ENCODE measurements at regions of chr10 and their contacts with region 1.

Region 1: GRCh38 chr10:102678842-102679289 is 34.6 kb downstream of the TRIM8 start:
- DNase-seq: peak; percentile 92
- ATAC-seq: peak; percentile 85
- H3K4me3 Mint-ChIP-seq: peak overlapping the region; percentile 27
- H3K27ac Mint-ChIP-seq: peak overlapping the region; percentile 94
- H3K4me1 Mint-ChIP-seq: peaks cover 61% of the 10 kb centered on the region
- H3K27me3 Mint-ChIP-seq: no peaks in the 10 kb centered on the region
- CTCF ChIP-seq: no peak; the same call in 1 of the 2 replicates

Region 2: DNA sequence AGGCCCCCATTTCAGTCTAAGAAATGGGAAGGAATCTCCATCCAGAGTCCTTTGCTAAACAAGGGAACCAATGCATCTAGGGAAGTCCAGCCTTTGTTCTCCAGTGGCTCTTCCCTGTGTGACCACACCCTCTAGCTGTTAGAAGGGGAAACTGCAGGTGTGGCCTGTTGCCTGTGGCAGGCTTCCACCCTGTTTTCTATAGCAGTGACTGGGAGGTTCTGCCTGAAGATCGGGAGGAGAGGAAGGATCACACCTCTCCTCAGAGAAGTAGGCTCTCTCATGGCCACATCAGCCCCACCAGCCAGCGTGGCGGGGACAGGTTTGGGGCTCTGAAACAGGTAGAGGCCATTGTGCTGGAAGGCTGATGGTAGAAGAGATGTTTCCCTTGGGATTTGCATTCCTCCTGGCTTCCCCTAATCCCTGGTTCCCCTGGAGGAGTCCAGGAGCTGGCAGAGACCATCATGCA is 82.3 kb before region 1 on chr10:
- CTCF ChIA-PET with region 1: interaction called, 13 read pairs
- POLR2A ChIA-PET with region 1: no interaction called
- DNase-seq: peak; percentile 72
- ATAC-seq: peak; percentile 90
- H3K4me3 Mint-ChIP-seq: no peak overlapping the region
- H3K27ac Mint-ChIP-seq: peak overlapping the region; percentile 28; the same call in 1 of the 2 replicates
- H3K4me1 Mint-ChIP-seq: peaks cover 16% of the 10 kb centered on the region
- H3K27me3 Mint-ChIP-seq: no peaks in the 10 kb centered on the region
- CTCF ChIP-seq: peak; percentile 60

Region 3: DNA sequence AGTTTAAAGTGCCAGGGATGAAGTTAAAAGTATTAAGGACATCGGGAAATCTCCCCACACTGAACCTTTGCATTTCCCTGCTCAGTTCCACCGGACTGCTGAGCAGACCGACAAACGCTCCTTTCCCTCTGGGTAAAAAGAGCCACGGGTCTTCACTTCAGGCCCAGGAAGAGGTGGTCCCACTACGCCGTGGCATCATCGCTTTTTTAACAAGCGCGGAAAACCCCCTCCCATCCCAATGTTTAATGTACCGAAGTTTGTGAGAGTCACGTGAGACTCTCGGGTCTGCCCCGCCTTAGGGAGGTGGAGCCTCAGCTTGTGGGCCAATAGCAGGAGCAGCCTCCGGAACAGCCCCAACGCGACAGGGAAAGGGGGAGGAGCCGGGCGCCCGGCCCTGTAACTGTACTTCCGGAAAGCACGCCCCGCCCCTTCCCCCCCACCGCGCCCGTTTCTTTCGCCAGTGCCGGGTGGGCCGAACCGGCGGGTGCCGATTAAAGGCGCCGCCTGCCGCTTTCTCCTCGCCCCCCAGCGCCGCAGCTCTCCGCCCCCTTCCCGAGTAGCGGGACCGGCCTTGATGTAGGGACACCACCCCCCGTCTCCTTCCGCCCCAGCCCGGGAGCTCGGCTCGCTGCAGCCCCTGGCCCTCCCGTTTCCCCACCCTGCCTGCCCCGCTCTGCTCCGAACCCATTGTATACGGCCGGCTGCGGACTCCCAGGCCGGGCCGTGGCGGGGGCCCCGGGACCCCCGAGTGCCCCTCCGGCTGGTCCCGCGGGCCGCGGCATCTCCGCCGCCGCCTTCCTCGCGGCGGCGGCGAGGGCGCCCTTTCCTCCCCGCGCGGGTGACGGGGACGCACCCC is 36.8 kb before region 1 on chr10:
- CTCF ChIA-PET with region 1: interaction called, 11 read pairs
- POLR2A ChIA-PET with region 1: interaction called, 5 read pairs
- DNase-seq: peak; percentile 99
- ATAC-seq: peak; percentile 86
- H3K4me3 Mint-ChIP-seq: peak overlapping the region; percentile 85
- H3K27ac Mint-ChIP-seq: peak overlapping the region; percentile 99
- H3K4me1 Mint-ChIP-seq: peaks cover 21% of the 10 kb centered on the region
- H3K27me3 Mint-ChIP-seq: peaks cover 4% of the 10 kb centered on the region; the same call in 1 of the 2 replicates
- CTCF ChIP-seq: no peak

Region 4: GRCh38 chr10:102656026-102656425 is 22.8 kb before region 1 on chr10:
- CTCF ChIA-PET with region 1: interaction called, 27 read pairs
- POLR2A ChIA-PET with region 1: interaction called, 6 read pairs
- DNase-seq: no peak
- ATAC-seq: no peak
- H3K4me3 Mint-ChIP-seq: no peak overlapping the region
- H3K27ac Mint-ChIP-seq: no peak overlapping the region
- H3K4me1 Mint-ChIP-seq: peaks cover 17% of the 10 kb centered on the region
- H3K27me3 Mint-ChIP-seq: no peaks in the 10 kb centered on the region; the same call in 1 of the 2 replicates
- CTCF ChIP-seq: no peak

Region 5: GRCh38 chr10:102713814-102714620 is 35.2 kb after region 1 on chr10 and contains the start of gene ARL3:
- CTCF ChIA-PET with region 1: interaction called, 101 read pairs
- POLR2A ChIA-PET with region 1: interaction called, 13 read pairs
- DNase-seq: peak; percentile 98
- ATAC-seq: peak; percentile 93
- H3K4me3 Mint-ChIP-seq: peak within 1 kb of the TSS; percentile 90
- H3K27ac Mint-ChIP-seq: peak within 1 kb of the TSS; percentile 73
- H3K4me1 Mint-ChIP-seq: peaks cover 46% of the 10 kb centered on the region
- H3K27me3 Mint-ChIP-seq: no peaks in the 10 kb centered on the region
- CTCF ChIP-seq: 0 out of 2 replicates have a peak, but pooled peaks have one; percentile 25
- total RNA-seq, gene ARL3: 13.3 to 16.1 TPM (median 15.6 TPM) in 3 replicates